Tibial artery (tissue), 4 donors: ENCODE measurements at regions of chr13 and their contacts with region 1.

Region 1: GRCh38 chr13:40069173-40070044 is 413.9 kb downstream of the COG6 start:
- DNase-seq: peak; percentile 72 to 85
- H3K4me3 ChIP-seq: no peak overlapping the region
- H3K27ac ChIP-seq: no peak overlapping the region
- H3K4me1 ChIP-seq: peaks cover 0 to 14% (median under 1%) of the 10 kb centered on the region in 4 donors
- H3K27me3 ChIP-seq: no peaks in the 10 kb centered on the region
- CTCF ChIP-seq: peak; percentile 85 to 90

Region 2: GRCh38 chr13:40116008-40116407 is 46.6 kb after region 1 on chr13:
- intact Hi-C with region 1: no loop called
- DNase-seq: no peak
- H3K4me3 ChIP-seq: no peak overlapping the region
- H3K27ac ChIP-seq: peak overlapping the region; percentile 1 to 49
- H3K4me1 ChIP-seq: peaks cover 0 to 34% (median 2%) of the 10 kb centered on the region in 4 donors
- H3K27me3 ChIP-seq: no peaks in the 10 kb centered on the region
- CTCF ChIP-seq: no peak

Region 3: GRCh38 chr13:40682449-40683240 is 613.2 kb after region 1 on chr13:
- intact Hi-C with region 1: loop called (anchors 2 kb)
- DNase-seq: no peak
- H3K4me3 ChIP-seq: no peak overlapping the region
- H3K27ac ChIP-seq: no peak overlapping the region
- H3K4me1 ChIP-seq: peaks cover 0 to 13% (median 0%) of the 10 kb centered on the region in 4 donors
- H3K27me3 ChIP-seq: no peaks in the 10 kb centered on the region
- CTCF ChIP-seq: peak; percentile 61 to 64

Region 4: DNA sequence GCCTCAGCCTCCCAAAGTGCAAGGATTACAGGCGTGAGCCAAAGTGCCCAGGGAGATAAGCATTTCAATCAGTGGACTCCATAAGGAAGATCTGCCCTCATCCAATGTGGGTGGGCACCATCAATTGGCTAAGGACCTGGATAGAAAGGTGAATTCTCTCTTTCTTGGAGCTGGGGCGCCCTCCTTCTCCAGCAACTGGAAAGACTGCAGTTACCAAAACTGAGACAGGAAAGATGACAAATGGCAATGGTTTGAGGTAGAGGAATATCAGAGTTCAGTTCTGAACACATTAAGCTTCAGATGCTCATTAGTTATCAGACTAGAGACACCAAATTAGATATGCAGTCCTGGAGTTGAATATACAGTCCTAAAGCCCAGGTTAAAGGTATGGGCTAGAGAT is 960.2 kb after region 1 on chr13:
- intact Hi-C with region 1: loop called (anchors 10 kb)
- DNase-seq: no peak
- H3K4me3 ChIP-seq: no peak overlapping the region
- H3K27ac ChIP-seq: no peak overlapping the region
- H3K4me1 ChIP-seq: peaks cover 0 to 22% (median 10%) of the 10 kb centered on the region in 4 donors
- H3K27me3 ChIP-seq: no peaks in the 10 kb centered on the region
- CTCF ChIP-seq: no peak